Tibial artery (tissue), 4 donors: ENCODE measurements at regions of chr5 and their contacts with region 1.

Region 1: DNA sequence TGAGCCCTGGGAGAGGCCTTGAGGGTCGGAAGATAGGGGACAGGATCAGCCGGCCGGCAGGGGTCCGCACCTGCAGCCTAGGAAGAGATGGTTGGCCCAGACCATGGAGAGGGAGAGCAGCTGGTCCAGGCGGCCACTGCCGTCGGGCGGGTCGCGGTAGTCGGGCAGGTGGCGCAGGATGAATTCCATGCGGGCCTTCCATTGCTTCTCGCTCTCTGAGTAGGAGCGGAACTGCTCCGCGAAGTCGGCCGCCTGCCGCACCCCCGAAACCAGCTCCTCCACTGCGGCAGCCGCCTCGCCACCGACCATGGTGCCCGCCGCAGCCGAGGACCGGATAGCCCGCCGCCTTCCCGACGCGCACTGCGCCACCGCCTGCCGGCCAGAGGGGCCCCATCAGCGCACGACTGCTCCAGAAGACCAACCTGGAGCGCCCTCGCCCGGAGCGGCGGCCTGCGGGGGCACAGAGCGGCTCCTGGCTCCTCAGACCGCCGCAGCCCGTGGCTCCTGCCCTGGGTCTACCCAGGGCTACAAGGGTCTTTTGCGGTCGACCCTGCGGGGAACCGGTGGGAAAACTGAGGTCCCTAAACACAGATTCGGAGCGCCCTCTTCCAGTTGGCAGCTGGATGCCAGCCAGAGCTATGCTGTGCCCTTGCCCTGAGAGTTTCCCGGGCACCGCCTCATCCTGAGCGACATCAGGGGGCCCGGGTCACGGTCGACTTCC is at the start of gene CDKN2AIPNL:
- DNase-seq: peak; percentile 90 to 95
- H3K4me3 ChIP-seq: peak within 1 kb of the TSS; percentile 93 to 95
- H3K27ac ChIP-seq: peak within 1 kb of the TSS; percentile 78 to 84
- H3K4me1 ChIP-seq: peaks cover 0 to 23% (median 22%) of the 10 kb centered on the region in 4 donors
- H3K27me3 ChIP-seq: no peaks in the 10 kb centered on the region
- CTCF ChIP-seq: peak; percentile 81 to 88

Region 2: DNA sequence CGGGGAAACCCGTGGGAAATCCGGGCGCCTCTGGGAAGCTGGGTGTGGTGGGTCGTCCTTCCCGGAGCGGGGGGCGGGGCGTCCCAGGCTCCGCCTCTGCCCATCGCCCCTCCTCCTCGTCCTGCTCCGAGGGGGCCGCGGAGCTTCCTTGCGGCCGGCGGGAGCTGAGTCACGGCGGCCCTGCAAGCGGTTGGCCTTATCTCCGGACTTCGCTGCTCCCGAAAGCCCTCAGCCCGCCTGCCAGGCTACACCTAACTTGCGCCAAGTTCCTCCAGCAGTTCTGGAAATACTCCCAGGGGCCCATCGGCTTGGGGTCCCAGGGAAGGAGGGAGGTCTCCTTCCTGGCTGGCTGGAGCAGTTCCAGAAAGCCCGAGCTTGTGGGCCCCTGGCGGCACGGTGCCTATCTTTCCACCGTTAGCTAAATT is 54.1 kb after region 1 on chr5:
- intact Hi-C with region 1: loop called (anchors 5 kb)
- DNase-seq: peak; percentile 90 to 95
- H3K4me3 ChIP-seq: peak overlapping the region; percentile 52 to 61
- H3K27ac ChIP-seq: peak overlapping the region; percentile 94
- H3K4me1 ChIP-seq: peaks cover 0 to 27% (median 23%) of the 10 kb centered on the region in 4 donors
- H3K27me3 ChIP-seq: no peaks in the 10 kb centered on the region
- CTCF ChIP-seq: no peak

Region 3: GRCh38 chr5:134577796-134578363 is 166.2 kb after region 1 on chr5:
- intact Hi-C with region 1: loop called (anchors 5 kb)
- DNase-seq: peak; percentile 80 to 87
- H3K4me3 ChIP-seq: no peak overlapping the region
- H3K27ac ChIP-seq: peak overlapping the region in 1 of 2 donors; percentile 40
- H3K4me1 ChIP-seq: peaks cover 4 to 31% (median 16%) of the 10 kb centered on the region in 4 donors
- H3K27me3 ChIP-seq: no peaks in the 10 kb centered on the region
- CTCF ChIP-seq: peak; percentile 84 to 86